ENCODE measurements at regions of chr6 and their contacts with region 1.

Region 1: DNA sequence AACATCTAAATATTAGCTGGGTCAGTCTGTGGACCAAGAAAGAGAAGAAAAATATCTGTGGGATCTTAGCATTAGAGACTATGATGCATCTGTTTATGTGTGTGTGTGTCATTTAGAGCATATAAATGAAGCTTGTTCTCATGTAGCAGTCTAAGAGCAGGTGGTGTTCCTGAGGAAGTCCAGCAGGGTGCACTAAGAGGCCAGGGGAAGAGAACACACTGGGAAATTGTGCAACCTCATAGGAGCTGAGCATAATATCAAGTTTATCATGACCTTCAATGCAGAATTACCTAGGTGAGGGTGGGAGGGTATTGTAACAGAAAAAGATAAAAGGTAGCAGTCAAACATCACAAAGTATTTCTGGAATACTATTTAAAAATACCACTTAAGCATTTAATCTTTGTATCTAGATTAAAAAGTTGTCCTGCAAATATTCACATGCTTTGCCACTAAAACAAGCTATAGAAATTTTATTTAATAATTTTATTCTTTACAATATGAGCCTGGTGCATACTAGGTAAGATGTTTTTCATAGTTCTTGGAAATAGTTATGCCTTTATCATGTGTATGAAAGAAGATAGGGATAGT is 80.5 kb downstream of the SMPDL3A start:
- DNase-seq: no peak

Region 2: GRCh38 chr6:123316733-123317323 is 447.3 kb after region 1 on chr6:
- intact Hi-C with region 1: loop called (anchors 10 kb)
- DNase-seq: no peak

Measured in cardiac septum (tissue), 1 donor.